H1 (cell line): ENCODE measurements at regions of chr3 and their contacts with region 1.

Region 1: DNA sequence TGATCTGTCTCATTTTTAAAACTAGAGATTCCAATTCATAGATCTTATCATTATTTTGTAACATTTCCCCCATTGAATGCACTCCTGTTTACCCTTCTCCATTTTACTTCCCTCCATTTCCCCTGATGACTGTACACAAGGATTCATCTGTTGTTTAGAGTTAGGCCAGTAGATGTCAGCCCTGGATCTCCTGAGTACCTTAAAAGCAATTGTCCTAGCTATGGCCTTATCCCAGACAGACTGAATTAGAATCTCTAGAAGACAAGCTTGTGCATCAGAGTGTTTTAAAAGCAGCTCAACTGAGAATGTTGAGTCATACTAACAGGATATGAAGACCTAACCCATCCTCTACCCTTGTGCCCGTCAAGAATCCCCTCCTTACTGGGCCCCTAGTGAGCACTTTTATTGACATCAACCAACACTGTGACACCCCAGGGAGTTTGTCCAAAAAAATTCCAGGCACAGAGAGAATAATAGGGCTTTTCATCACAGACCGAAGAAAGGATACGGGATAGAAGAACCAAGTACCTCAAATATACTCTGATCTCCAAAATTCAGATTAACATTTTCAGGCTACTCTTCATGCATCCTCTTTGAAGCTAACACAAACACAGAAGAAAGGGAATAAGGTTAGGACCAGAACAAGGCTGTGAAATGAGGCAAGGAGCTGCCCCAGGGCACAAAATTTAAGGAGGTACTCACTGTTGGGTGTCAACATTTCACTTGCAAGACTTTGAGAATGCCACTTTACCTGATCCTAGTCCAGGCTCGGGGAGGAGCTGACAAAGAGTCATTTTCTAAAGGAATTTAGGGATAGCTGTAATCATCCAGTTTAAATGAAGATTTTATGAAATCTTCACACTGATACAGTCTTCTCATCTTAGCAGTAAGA is 17.1 kb downstream of the ZBED2 start:
- DNase-seq: no peak
- H3K4me3 ChIP-seq: no peak overlapping the region
- H3K27ac ChIP-seq: no peak overlapping the region
- H3K4me1 ChIP-seq: no peaks in the 10 kb centered on the region
- H3K27me3 ChIP-seq: no peaks in the 10 kb centered on the region
- CTCF ChIP-seq: peak in 2 of 3 experiments; percentile 44 to 51; a peak in 2 of 4 replicates
- EP300 ChIP-seq: no peak
- POLR2A ChIP-seq: no peak
- RAD21 ChIP-seq: peak; percentile 69 to 74

Region 2: DNA sequence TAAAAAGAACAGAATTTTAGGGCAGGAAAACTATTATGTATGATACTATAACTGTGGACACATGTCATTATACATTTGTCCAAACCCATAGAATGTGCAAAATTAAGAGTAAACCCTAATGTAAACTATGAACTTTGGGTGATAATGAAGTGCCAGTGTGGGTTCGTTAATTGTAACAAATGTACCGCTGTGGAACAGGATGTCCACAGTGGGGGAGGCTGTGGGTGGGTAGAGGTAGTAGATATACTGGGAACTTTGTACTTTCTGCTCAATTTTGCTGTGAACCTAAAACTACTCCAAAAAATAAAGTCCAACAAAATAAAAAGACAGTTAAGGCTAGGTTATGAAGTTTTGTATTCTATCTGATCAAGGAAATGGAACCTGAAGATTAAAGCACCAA is 11.2 kb before region 1 on chr3:
- CTCF ChIA-PET with region 1: no interaction called
- POLR2A ChIA-PET with region 1: no interaction called
- DNase-seq: no peak
- H3K4me3 ChIP-seq: no peak overlapping the region
- H3K27ac ChIP-seq: no peak overlapping the region
- H3K4me1 ChIP-seq: no peaks in the 10 kb centered on the region
- H3K27me3 ChIP-seq: peaks cover 0 to 2% (median 0%) of the 10 kb centered on the region in 4 experiments; a peak in 1 of 7 replicates
- CTCF ChIP-seq: no peak
- EP300 ChIP-seq: no peak
- POLR2A ChIP-seq: no peak
- RAD21 ChIP-seq: no peak

Region 3: DNA sequence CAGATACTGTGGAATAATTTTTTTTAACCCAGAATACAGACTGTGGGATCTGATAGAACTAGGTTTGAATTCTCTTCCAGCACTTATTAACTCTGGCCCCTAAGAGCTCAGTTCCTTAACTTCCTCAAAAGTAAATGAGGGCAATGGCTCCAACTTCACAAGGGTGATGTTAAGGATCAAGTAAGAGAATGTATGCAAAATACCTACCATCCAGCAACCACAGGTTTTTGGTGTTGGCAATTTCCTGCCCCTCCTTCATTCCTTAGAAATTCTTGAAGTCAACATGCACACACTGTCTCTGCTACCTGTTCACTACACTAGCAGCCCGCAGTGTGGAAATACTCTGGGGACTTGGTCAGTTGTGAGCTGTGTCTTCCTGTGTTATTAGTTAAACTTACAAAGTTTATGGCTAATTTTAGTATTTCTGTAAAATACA is 12.1 kb after region 1 on chr3:
- CTCF ChIA-PET with region 1: interaction called, 12 read pairs
- POLR2A ChIA-PET with region 1: no interaction called
- DNase-seq: no peak
- H3K4me3 ChIP-seq: no peak overlapping the region
- H3K27ac ChIP-seq: no peak overlapping the region
- H3K4me1 ChIP-seq: no peaks in the 10 kb centered on the region
- H3K27me3 ChIP-seq: no peaks in the 10 kb centered on the region
- CTCF ChIP-seq: no peak
- EP300 ChIP-seq: no peak
- POLR2A ChIP-seq: no peak
- RAD21 ChIP-seq: no peak

Region 4: GRCh38 chr3:111653766-111654165 is 75.7 kb after region 1 on chr3:
- CTCF ChIA-PET with region 1: no interaction called
- POLR2A ChIA-PET with region 1: no interaction called
- DNase-seq: no peak
- H3K4me3 ChIP-seq: no peak overlapping the region
- H3K27ac ChIP-seq: no peak overlapping the region
- H3K4me1 ChIP-seq: peaks cover 0 to 9% (median 3%) of the 10 kb centered on the region in 4 experiments; a peak in 2 of 7 replicates
- H3K27me3 ChIP-seq: no peaks in the 10 kb centered on the region
- CTCF ChIP-seq: no peak
- EP300 ChIP-seq: no peak
- POLR2A ChIP-seq: no peak
- RAD21 ChIP-seq: no peak

Region 5: DNA sequence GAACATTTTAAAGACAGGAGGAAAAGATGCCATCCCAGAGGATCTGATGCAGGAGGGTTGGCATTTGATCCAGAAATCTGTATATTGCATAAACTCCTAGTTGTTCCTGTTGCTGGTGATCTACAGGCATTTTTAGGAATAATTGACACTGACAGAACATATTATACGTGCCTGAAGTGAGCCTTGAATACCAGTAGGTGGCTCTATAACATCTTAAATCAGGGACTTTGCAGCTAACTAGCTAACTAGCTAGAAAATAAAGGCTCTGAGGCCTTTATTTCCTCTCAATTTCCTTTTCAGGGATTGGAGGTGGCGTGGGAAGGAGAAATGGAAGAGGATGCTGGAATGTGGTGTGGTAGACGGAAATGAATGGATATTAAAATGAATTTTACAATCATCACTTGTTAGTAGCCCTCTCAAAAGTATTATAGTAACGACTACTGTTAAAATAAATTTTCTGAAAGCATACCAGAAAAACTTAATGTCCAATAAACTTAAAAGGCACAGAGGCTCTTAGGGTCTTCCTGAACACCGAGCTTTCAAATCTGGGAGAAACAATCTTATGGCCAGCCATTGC is 91.0 kb after region 1 on chr3:
- CTCF ChIA-PET with region 1: interaction called, 10 read pairs
- POLR2A ChIA-PET with region 1: no interaction called
- DNase-seq: no peak
- H3K4me3 ChIP-seq: no peak overlapping the region
- H3K27ac ChIP-seq: no peak overlapping the region
- H3K4me1 ChIP-seq: peaks cover 0 to 2% (median 0%) of the 10 kb centered on the region in 4 experiments; a peak in 1 of 7 replicates
- H3K27me3 ChIP-seq: peaks cover 0 to 9% (median 6%) of the 10 kb centered on the region in 4 experiments; a peak in 6 of 7 replicates
- CTCF ChIP-seq: peak in 2 of 3 experiments; percentile 65 to 75; a peak in 3 of 4 replicates
- EP300 ChIP-seq: no peak
- POLR2A ChIP-seq: no peak
- RAD21 ChIP-seq: peak; percentile 81 to 89